ENCODE measurements at regions of chr3 and their contacts with region 1.

Region 1: GRCh38 chr3:118817748-118818165 is 216.9 kb downstream of the IGSF11 start:
- DNase-seq: peak in 1 of 2 experiments; percentile 25
- H3K4me3 ChIP-seq: no peak overlapping the region
- H3K27ac ChIP-seq: no peak overlapping the region
- H3K4me1 ChIP-seq: no peaks in the 10 kb centered on the region
- H3K27me3 ChIP-seq: no peaks in the 10 kb centered on the region
- CTCF ChIP-seq: peak; percentile 88

Region 2: DNA sequence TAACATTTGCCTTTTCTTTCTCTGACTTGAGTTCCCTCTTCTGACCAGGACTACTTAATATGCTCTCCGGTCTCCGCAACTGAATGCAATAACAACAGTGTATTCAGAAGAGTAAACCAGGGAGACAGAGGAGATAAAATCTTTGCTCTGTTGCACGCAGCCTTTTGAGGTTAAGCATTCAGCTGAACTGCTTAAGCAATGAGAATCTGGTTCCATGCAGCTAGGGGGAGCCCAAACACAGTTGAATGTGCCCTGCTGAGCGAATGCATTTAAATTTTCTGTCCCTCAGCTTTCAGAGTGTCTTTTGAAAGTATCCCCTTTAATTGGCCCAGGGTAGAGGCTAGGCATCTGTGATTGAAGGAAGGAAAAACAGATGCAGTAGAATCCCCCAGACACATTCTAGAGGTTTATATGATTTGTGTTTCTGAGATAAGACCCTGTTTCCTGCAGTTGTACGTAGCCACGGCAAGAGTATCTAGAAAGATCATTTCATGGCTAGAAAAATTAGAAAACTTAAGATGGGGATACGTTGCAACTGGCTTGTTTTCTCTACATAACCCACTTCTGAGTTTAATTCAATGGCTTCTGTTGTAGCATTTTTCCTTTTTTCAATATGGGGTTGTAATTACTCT is 1798.6 kb before region 1 on chr3:
- CTCF ChIA-PET with region 1: no interaction called
- POLR2A ChIA-PET with region 1: no interaction called
- intact Hi-C with region 1: loop called (anchors 1 kb)
- DNase-seq: peak in 1 of 2 experiments; percentile 22
- H3K4me3 ChIP-seq: no peak overlapping the region
- H3K27ac ChIP-seq: no peak overlapping the region
- H3K4me1 ChIP-seq: no peaks in the 10 kb centered on the region
- H3K27me3 ChIP-seq: 0 out of 2 replicates have a peak, but pooled peaks cover 3% of the 10 kb centered on the region
- CTCF ChIP-seq: peak; percentile 71

Region 3: GRCh38 chr3:117059067-117059955 is 1758.4 kb before region 1 on chr3:
- CTCF ChIA-PET with region 1: no interaction called
- POLR2A ChIA-PET with region 1: no interaction called
- intact Hi-C with region 1: loop called (anchors 5 kb)
- DNase-seq: no peak
- H3K4me3 ChIP-seq: no peak overlapping the region
- H3K27ac ChIP-seq: no peak overlapping the region
- H3K4me1 ChIP-seq: no peaks in the 10 kb centered on the region
- H3K27me3 ChIP-seq: no peaks in the 10 kb centered on the region
- CTCF ChIP-seq: peak; percentile 68

Measured in PC-9 (cell line).